ENCODE measurements at regions of chr20 and their contacts with region 1.

Region 1: GRCh38 chr20:54083459-54083858 is 13.1 kb upstream of the BCAS1 start:
- DNase-seq: no peak
- ATAC-seq: peak; percentile 75
- H3K4me3 ChIP-seq: no peak overlapping the region
- H3K27ac ChIP-seq: no peak overlapping the region
- H3K4me1 ChIP-seq: peaks cover 30% of the 10 kb centered on the region
- H3K27me3 ChIP-seq: no peaks in the 10 kb centered on the region
- CTCF ChIP-seq: no peak
- EP300 ChIP-seq: no peak
- POLR2A ChIP-seq: no peak
- RAD21 ChIP-seq: no peak

Region 2: DNA sequence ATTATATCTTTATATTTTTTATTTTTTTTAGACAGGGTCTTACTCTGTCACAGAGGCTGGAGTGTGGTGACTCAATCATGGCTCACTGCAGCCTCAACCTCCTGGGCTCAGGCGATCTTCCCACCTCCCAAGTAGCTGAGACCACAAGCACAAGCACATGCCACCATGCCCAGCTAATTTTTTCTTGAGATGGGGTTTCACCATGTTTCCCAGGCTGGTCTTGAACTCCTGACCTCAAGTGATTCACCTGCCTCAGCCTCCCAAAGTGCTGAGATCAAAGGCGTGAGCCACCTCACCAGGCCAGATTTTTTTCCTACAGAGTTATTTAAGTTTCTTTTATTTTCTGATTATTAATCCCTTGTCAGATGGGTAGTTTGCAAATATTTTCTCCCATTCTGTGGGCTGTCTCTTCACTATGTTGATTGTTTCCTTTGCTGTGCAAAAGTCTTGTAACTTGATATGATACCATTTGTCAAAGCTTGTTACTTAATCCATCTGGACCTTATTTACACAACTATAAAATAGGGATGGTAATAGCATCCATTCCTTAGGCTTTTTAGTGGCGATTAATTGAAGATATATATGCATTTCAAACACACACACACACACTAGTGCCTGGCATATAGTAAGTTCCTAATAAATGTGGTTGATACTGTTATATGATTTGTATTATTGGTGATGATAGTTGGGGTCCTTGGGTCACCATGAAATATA is 200.2 kb before region 1 on chr20:
- CTCF ChIA-PET with region 1: no interaction called
- POLR2A ChIA-PET with region 1: no interaction called
- RAD21 ChIA-PET with region 1: no interaction called
- SMC1A ChIA-PET with region 1: no interaction called
- in situ Hi-C with region 1: no loop called
- intact Hi-C with region 1: no loop called
- DNase-seq: no peak
- ATAC-seq: no peak
- H3K4me3 ChIP-seq: no peak overlapping the region
- H3K27ac ChIP-seq: no peak overlapping the region
- H3K4me1 ChIP-seq: peaks cover 11% of the 10 kb centered on the region
- H3K27me3 ChIP-seq: no peaks in the 10 kb centered on the region
- CTCF ChIP-seq: no peak
- EP300 ChIP-seq: no peak
- POLR2A ChIP-seq: no peak
- RAD21 ChIP-seq: no peak

Region 3: DNA sequence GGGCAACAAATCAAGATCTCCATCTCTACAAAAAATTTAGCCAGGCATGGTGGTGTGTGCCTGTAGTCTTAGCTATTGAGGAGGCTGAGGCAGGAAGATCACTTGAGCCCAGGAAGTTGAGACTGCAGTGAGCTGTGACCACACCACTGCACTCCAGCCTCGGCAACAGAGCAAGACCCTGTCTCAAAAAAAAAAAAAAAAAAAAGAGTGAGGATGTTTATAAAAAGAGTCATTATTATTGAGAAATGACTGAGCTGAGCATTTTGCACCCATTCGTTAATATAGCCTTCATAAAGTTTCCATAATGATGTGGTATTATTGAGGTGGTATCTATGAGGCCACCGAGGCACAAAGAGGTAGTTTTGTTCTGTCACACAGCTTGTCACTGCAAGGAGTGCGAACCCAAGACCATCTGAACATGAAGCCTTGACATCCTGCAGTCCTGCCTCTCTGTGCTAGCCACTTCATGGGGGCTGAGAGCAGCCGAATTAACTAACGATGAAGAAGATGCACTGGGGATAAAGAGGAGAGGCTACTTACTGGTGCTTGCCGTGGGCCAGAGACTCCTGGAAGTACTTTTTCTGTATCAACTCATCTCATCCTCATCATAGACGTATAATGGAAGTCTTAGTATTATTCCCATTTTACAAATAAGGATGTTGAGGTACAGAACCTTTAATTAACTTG is 188.6 kb before region 1 on chr20:
- CTCF ChIA-PET with region 1: no interaction called
- POLR2A ChIA-PET with region 1: no interaction called
- RAD21 ChIA-PET with region 1: no interaction called
- SMC1A ChIA-PET with region 1: no interaction called
- in situ Hi-C with region 1: no loop called
- intact Hi-C with region 1: no loop called
- DNase-seq: no peak
- ATAC-seq: peak; percentile 7
- H3K4me3 ChIP-seq: peak overlapping the region; percentile 14; the same call in 1 of the 2 replicates
- H3K27ac ChIP-seq: peak overlapping the region; percentile 98
- H3K4me1 ChIP-seq: peaks cover 36% of the 10 kb centered on the region
- H3K27me3 ChIP-seq: no peaks in the 10 kb centered on the region
- CTCF ChIP-seq: no peak
- EP300 ChIP-seq: no peak
- POLR2A ChIP-seq: no peak
- RAD21 ChIP-seq: no peak

Region 4: DNA sequence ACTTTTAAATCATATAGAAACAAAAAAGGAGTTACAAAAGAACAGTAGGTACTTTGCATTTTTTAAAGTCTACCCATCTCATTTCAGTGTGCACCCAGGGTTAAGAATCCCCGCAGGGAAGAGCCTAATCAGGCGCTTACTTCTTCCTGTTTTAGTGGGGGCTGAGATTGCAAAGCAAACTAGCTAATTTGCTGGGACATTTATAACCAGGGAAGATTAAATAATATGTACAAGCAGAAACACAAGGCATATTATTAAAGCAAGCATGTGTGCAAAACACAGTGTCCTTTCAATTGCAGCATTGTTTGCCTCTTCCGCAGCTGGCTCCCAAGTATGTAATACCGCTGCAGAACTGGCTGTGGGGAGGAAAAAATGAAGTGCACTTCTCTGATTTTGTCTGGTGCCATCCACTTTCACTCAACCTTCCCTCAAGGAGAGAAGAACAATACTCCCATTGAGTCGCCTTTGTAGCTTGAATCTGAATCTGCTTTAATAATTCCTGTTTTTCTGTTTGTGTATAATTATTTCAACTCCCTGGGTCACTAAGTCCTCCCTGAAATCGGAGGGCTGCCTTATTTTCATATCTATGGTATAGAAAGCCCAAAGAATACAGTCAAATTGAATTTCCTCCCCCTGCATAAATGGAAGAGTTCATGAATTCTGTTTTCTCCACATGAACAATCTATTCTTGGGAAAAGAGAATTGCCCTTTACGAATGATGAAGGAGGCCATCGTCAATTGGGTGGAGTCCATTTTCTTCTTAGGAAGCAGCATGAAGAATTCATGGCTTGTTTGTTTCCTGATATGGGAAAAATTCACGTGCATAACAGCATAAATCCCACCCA is 10.2 kb after region 1 on chr20:
- CTCF ChIA-PET with region 1: interaction called, 6 read pairs
- POLR2A ChIA-PET with region 1: interaction called, 3 read pairs
- RAD21 ChIA-PET with region 1: no interaction called
- SMC1A ChIA-PET with region 1: interaction called, 14 read pairs
- in situ Hi-C with region 1: no loop called
- intact Hi-C with region 1: no loop called
- DNase-seq: no peak
- ATAC-seq: no peak
- H3K4me3 ChIP-seq: no peak overlapping the region
- H3K27ac ChIP-seq: no peak overlapping the region
- H3K4me1 ChIP-seq: peaks cover 8% of the 10 kb centered on the region
- H3K27me3 ChIP-seq: no peaks in the 10 kb centered on the region
- CTCF ChIP-seq: no peak
- EP300 ChIP-seq: no peak
- POLR2A ChIP-seq: no peak
- RAD21 ChIP-seq: no peak

Measured in GM12878 (cell line).